ENCODE measurements at regions of chr1 and their contacts with region 1.

Region 1: GRCh38 chr1:235783148-235783776 is 83.4 kb downstream of the LYST start:
- DNase-seq: peak; percentile 73
- H3K4me3 Mint-ChIP-seq: no peak overlapping the region
- H3K27ac Mint-ChIP-seq: no peak overlapping the region
- H3K4me1 Mint-ChIP-seq: peaks cover 10% of the 10 kb centered on the region
- H3K27me3 Mint-ChIP-seq: no peaks in the 10 kb centered on the region
- CTCF ChIP-seq: peak; percentile 72

Region 2: GRCh38 chr1:235093696-235094592 is 689.3 kb before region 1 on chr1:
- CTCF ChIA-PET with region 1: interaction called, 4 read pairs
- POLR2A ChIA-PET with region 1: no interaction called
- intact Hi-C with region 1: loop called (anchors 1 kb)
- DNase-seq: peak; percentile 83
- H3K4me3 Mint-ChIP-seq: no peak overlapping the region
- H3K27ac Mint-ChIP-seq: no peak overlapping the region
- H3K4me1 Mint-ChIP-seq: peaks cover 6% of the 10 kb centered on the region
- H3K27me3 Mint-ChIP-seq: no peaks in the 10 kb centered on the region
- CTCF ChIP-seq: peak; percentile 100

Region 3: DNA sequence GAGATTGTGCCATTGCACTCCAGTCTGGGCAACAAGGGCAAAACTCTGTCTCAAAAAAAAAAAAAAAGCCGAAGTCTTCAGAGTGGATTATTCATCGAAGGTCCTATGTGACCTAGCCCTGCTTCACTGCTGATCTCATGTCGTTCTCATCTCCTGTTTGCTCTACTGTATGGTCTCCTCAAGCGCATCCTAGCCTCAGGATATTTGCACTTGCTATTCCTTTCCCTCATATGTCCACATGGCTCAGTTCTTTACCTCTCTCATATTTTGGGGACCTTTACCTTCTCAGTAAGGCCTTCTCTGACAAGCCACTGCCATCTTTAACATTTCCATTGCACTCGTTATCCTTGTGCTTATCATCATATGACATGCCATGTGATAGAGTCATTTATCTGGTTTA is 413.5 kb before region 1 on chr1:
- CTCF ChIA-PET with region 1: no interaction called
- POLR2A ChIA-PET with region 1: no interaction called
- intact Hi-C with region 1: no loop called
- DNase-seq: no peak
- H3K4me3 Mint-ChIP-seq: peak overlapping the region; percentile 3
- H3K27ac Mint-ChIP-seq: peak overlapping the region; percentile 17
- H3K4me1 Mint-ChIP-seq: peaks cover 26% of the 10 kb centered on the region
- H3K27me3 Mint-ChIP-seq: no peaks in the 10 kb centered on the region
- CTCF ChIP-seq: no peak

Region 4: GRCh38 chr1:235513495-235514366 is 269.5 kb before region 1 on chr1:
- CTCF ChIA-PET with region 1: interaction called, 135 read pairs
- POLR2A ChIA-PET with region 1: interaction called, 6 read pairs
- intact Hi-C with region 1: loop called (anchors 1 kb)
- DNase-seq: peak; percentile 94
- H3K4me3 Mint-ChIP-seq: no peak overlapping the region
- H3K27ac Mint-ChIP-seq: no peak overlapping the region
- H3K4me1 Mint-ChIP-seq: peaks cover 6% of the 10 kb centered on the region
- H3K27me3 Mint-ChIP-seq: no peaks in the 10 kb centered on the region
- CTCF ChIP-seq: peak; percentile 98

Region 5: DNA sequence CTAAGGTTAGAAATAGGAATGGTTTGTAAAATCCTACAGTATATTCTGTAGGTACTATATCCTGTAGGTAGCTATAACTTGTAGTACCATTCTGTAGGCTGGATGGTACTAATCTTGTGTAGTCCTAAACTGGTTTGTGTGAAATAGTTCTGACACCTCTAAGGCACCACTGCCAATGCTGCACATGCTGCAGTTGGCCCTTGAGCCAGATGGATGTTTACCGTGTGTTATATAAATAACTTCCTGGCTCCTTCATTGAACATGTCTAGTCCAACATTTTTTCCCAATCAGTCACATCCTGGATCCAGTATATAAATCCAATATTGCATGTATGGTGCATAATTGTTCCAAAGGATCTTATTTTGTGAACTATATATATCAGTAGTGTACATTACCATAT is 44.1 kb before region 1 on chr1:
- CTCF ChIA-PET with region 1: interaction called, 11 read pairs
- POLR2A ChIA-PET with region 1: no interaction called
- intact Hi-C with region 1: no loop called
- DNase-seq: peak; percentile 73
- H3K4me3 Mint-ChIP-seq: no peak overlapping the region
- H3K27ac Mint-ChIP-seq: no peak overlapping the region
- H3K4me1 Mint-ChIP-seq: peaks cover 25% of the 10 kb centered on the region
- H3K27me3 Mint-ChIP-seq: no peaks in the 10 kb centered on the region
- CTCF ChIP-seq: no peak

Region 6: GRCh38 chr1:235802947-235803346 is 19.7 kb after region 1 on chr1:
- CTCF ChIA-PET with region 1: interaction called, 26 read pairs
- POLR2A ChIA-PET with region 1: interaction called, 3 read pairs
- intact Hi-C with region 1: no loop called
- DNase-seq: no peak
- H3K4me3 Mint-ChIP-seq: no peak overlapping the region
- H3K27ac Mint-ChIP-seq: no peak overlapping the region
- H3K4me1 Mint-ChIP-seq: no peaks in the 10 kb centered on the region
- H3K27me3 Mint-ChIP-seq: no peaks in the 10 kb centered on the region
- CTCF ChIP-seq: no peak

Region 7: GRCh38 chr1:235855811-235856429 is 72.7 kb after region 1 on chr1:
- CTCF ChIA-PET with region 1: interaction called, 11 read pairs
- POLR2A ChIA-PET with region 1: no interaction called
- intact Hi-C with region 1: no loop called
- DNase-seq: no peak
- H3K4me3 Mint-ChIP-seq: no peak overlapping the region
- H3K27ac Mint-ChIP-seq: no peak overlapping the region
- H3K4me1 Mint-ChIP-seq: peaks cover 20% of the 10 kb centered on the region
- H3K27me3 Mint-ChIP-seq: no peaks in the 10 kb centered on the region
- CTCF ChIP-seq: no peak

Region 8: GRCh38 chr1:236345728-236346127 is 562.5 kb after region 1 on chr1:
- CTCF ChIA-PET with region 1: no interaction called
- POLR2A ChIA-PET with region 1: no interaction called
- intact Hi-C with region 1: no loop called
- DNase-seq: peak; percentile 33
- H3K4me3 Mint-ChIP-seq: no peak overlapping the region
- H3K27ac Mint-ChIP-seq: no peak overlapping the region
- H3K4me1 Mint-ChIP-seq: no peaks in the 10 kb centered on the region
- H3K27me3 Mint-ChIP-seq: no peaks in the 10 kb centered on the region
- CTCF ChIP-seq: no peak